ENCODE measurements at regions of chr16 and their contacts with region 1.

Region 1: GRCh38 chr16:8572919-8573724 is 17.2 kb downstream of the TMEM114 start:
- DNase-seq: peak; percentile 91
- H3K4me3 ChIP-seq: no peak overlapping the region
- H3K27ac ChIP-seq: peak overlapping the region; percentile 100
- H3K4me1 ChIP-seq: peaks cover 74% of the 10 kb centered on the region
- H3K27me3 ChIP-seq: no peaks in the 10 kb centered on the region
- CTCF ChIP-seq: peak; percentile 80

Region 2: GRCh38 chr16:8173111-8173644 is 399.9 kb before region 1 on chr16:
- CTCF ChIA-PET with region 1: no interaction called
- POLR2A ChIA-PET with region 1: no interaction called
- intact Hi-C with region 1: no loop called
- DNase-seq: peak; percentile 82
- H3K4me3 ChIP-seq: no peak overlapping the region
- H3K27ac ChIP-seq: no peak overlapping the region
- H3K4me1 ChIP-seq: no peaks in the 10 kb centered on the region
- H3K27me3 ChIP-seq: peaks cover 2% of the 10 kb centered on the region
- CTCF ChIP-seq: peak; percentile 95

Region 3: GRCh38 chr16:8607214-8607613 is 34.1 kb after region 1 on chr16:
- CTCF ChIA-PET with region 1: no interaction called
- POLR2A ChIA-PET with region 1: no interaction called
- intact Hi-C with region 1: no loop called
- DNase-seq: no peak
- H3K4me3 ChIP-seq: no peak overlapping the region
- H3K27ac ChIP-seq: no peak overlapping the region
- H3K4me1 ChIP-seq: no peaks in the 10 kb centered on the region
- H3K27me3 ChIP-seq: no peaks in the 10 kb centered on the region
- CTCF ChIP-seq: no peak

Region 4: DNA sequence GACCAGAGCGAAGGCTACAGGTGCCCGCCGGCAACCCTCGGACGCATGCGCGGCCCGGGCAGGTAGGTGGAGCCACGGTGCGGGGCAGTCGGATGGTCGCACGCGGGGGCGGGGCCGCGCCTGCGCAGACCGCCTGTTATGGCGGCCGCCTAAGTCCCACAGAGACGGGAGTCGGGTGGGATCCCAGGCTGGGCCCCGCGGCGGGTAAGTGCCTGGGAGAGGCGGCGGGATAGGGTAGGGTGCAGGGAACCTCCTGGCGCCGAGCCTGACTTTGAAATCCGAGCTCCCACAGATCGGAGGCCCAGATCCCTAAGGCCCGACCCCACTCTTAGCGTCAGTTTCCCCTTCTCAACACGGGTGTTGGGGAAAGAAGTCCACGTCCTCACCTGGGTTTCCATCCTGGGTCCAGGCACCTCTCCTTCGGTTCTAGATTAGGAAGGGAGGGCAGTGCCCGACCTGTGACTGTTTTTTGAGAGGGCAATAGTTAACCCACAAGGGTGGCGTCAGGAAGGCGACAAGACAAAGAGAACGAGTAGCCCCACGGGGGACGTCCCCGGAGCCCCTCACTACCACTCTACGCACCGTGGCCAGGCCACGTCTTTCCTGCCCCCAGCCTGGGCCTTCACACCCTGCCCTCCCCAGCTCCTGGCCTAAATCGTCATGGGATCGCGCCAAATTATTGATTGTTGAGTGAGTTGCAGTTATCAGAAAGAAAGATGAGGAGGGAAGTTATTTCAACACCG is 48.6 kb after region 1 on chr16 and contains the start of gene METTL22:
- CTCF ChIA-PET with region 1: no interaction called
- POLR2A ChIA-PET with region 1: no interaction called
- intact Hi-C with region 1: loop called (anchors 2 kb)
- DNase-seq: peak; percentile 91
- H3K4me3 ChIP-seq: peak within 1 kb of the TSS; percentile 90
- H3K27ac ChIP-seq: peak within 1 kb of the TSS; percentile 93
- H3K4me1 ChIP-seq: peaks cover 24% of the 10 kb centered on the region
- H3K27me3 ChIP-seq: no peaks in the 10 kb centered on the region
- CTCF ChIP-seq: no peak
- total RNA-seq, gene METTL22: 91.2 and 116 TPM in 2 replicates

Region 5: GRCh38 chr16:8655184-8655717 is 82.1 kb after region 1 on chr16:
- CTCF ChIA-PET with region 1: interaction called, 3 read pairs
- POLR2A ChIA-PET with region 1: no interaction called
- intact Hi-C with region 1: loop called (anchors 2 kb)
- DNase-seq: peak; percentile 61
- H3K4me3 ChIP-seq: no peak overlapping the region
- H3K27ac ChIP-seq: peak overlapping the region; percentile 37
- H3K4me1 ChIP-seq: peaks cover 4% of the 10 kb centered on the region
- H3K27me3 ChIP-seq: no peaks in the 10 kb centered on the region
- CTCF ChIP-seq: peak; percentile 71

Region 6: DNA sequence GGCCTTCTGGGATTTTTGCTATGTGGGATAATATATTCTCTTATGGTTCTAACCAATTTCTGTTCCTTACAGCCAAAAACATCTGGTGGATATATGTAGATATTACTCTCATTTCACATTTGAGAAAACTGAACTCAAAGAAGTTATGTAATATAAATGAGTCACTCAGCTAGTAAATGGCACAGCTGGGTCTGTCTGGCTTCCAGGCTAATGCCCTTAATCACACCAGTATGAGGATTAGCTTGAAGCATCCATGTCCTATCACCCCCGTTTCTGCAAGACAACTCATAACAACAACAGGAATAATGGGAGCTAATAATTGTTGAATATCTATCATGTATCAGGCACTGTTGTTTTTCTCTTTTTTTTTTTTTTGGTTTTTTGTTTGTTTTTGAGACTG is 425.0 kb after region 1 on chr16:
- CTCF ChIA-PET with region 1: interaction called, 12 read pairs
- POLR2A ChIA-PET with region 1: no interaction called
- intact Hi-C with region 1: no loop called
- DNase-seq: peak; percentile 67
- H3K4me3 ChIP-seq: no peak overlapping the region
- H3K27ac ChIP-seq: no peak overlapping the region
- H3K4me1 ChIP-seq: no peaks in the 10 kb centered on the region
- H3K27me3 ChIP-seq: no peaks in the 10 kb centered on the region
- CTCF ChIP-seq: no peak

Region 7: DNA sequence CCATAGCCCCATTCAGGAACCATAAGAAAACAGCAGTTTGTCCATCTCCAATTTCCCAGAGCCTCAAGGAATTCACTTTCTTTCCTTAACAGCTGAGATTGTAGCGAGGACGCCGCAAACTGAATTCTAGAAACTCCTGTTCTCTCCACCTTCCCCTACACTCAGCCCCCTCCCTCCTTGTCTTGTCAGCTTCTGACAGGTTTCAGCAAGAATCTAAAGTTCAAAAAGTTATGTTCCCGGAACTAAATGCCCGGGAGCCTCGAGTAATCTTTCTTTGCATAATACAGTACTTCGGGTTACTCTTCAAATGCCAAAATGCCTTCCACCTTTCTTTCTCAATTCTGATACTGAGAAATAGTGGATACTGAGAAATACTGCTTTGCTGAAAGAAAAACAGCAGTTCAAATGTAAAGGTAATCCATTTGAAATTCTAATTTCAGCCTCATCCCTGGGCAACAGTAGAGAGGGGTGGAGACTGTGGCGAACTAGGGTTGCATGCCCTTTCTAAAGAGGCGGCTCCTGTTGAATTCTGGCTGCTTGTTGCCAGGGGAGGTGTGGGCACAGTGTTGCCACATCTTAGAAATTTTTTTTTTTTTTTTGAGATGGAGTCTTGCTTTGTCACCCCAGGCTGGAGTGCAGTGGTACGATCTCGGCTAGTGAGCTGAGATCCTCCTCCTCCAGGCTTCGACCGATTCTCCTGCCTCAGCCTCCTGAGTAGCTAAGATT is 454.1 kb after region 1 on chr16:
- CTCF ChIA-PET with region 1: no interaction called
- POLR2A ChIA-PET with region 1: no interaction called
- intact Hi-C with region 1: no loop called
- DNase-seq: no peak
- H3K4me3 ChIP-seq: no peak overlapping the region
- H3K27ac ChIP-seq: no peak overlapping the region
- H3K4me1 ChIP-seq: no peaks in the 10 kb centered on the region
- H3K27me3 ChIP-seq: no peaks in the 10 kb centered on the region
- CTCF ChIP-seq: no peak

Region 8: GRCh38 chr16:9090960-9091866 is 518.1 kb after region 1 on chr16 and contains the start of gene HAPSTR1:
- CTCF ChIA-PET with region 1: no interaction called
- POLR2A ChIA-PET with region 1: no interaction called
- intact Hi-C with region 1: loop called (anchors 5 kb)
- DNase-seq: peak; percentile 100
- H3K4me3 ChIP-seq: peak within 1 kb of the TSS; percentile 70
- H3K27ac ChIP-seq: peak within 1 kb of the TSS; percentile 97
- H3K4me1 ChIP-seq: peaks cover 23% of the 10 kb centered on the region
- H3K27me3 ChIP-seq: no peaks in the 10 kb centered on the region
- CTCF ChIP-seq: no peak
- total RNA-seq, gene HAPSTR1: 83.8 and 90.4 TPM in 2 replicates

Region 9: DNA sequence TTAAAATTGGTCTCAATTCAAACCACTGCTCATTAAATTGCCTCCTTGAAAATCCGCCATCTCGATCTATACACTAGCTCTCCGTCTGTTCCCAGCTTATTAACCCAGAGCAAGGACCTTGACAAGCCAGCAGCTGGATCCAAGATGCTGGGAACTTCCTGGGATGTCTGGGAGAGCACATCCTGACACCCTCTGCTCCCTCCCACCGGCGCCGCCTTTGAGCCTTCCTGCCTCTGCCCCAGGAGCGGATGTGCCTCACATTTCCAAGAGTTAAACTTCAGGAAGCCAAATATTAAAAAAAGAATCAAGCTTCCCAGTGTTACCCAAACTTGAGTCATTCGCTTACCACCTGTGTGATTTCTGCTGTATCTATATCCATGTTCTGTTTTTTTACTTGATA is 626.2 kb after region 1 on chr16:
- CTCF ChIA-PET with region 1: interaction called, 4 read pairs
- POLR2A ChIA-PET with region 1: interaction called, 4 read pairs
- intact Hi-C with region 1: loop called (anchors 1 kb)
- DNase-seq: peak; percentile 95
- H3K4me3 ChIP-seq: no peak overlapping the region
- H3K27ac ChIP-seq: peak overlapping the region; percentile 99
- H3K4me1 ChIP-seq: peaks cover 23% of the 10 kb centered on the region
- H3K27me3 ChIP-seq: no peaks in the 10 kb centered on the region
- CTCF ChIP-seq: no peak

Measured in A673 (cell line).